Esophagus muscularis mucosa (tissue), 4 donors: ENCODE measurements at regions of chr11 and their contacts with region 1.

Region 1: GRCh38 chr11:69131644-69132300 is 24.0 kb upstream of the SMIM38 start:
- DNase-seq: no peak
- H3K4me3 ChIP-seq: no peak overlapping the region
- H3K27ac ChIP-seq: no peak overlapping the region
- H3K4me1 ChIP-seq: peaks cover 15 to 19% (median 18%) of the 10 kb centered on the region in 4 donors
- H3K27me3 ChIP-seq: no peaks in the 10 kb centered on the region
- CTCF ChIP-seq: peak; percentile 69 to 89 (median 86)
- EP300 ChIP-seq: no peak
- POLR2A ChIP-seq: no peak

Region 2: DNA sequence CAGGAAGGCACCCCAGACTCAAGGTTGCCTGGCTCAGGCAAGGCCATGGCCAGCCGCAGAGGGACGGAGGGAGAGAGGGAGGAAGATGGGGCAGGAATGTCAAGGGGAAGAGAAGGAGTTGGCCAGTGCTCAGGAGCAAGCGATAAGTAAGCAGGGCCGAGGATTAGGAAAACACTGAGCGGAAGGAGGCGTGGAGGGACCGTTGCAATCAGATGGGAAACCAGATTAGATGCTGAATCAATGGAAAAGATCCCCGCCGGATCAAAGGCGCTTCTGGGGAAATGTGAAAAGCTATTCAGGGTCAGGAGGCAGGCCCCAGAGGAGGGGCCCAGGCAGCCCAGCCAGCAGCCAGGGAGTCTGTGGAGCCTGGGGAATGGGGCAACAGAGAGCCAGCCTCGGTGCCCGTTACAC is 135.6 kb after region 1 on chr11:
- intact Hi-C with region 1: no loop called
- DNase-seq: no peak
- H3K4me3 ChIP-seq: no peak overlapping the region
- H3K27ac ChIP-seq: no peak overlapping the region
- H3K4me1 ChIP-seq: peaks cover 0 to 16% (median 2%) of the 10 kb centered on the region in 4 donors
- H3K27me3 ChIP-seq: peaks cover 0 to 21% (median 0%) of the 10 kb centered on the region in 4 donors
- CTCF ChIP-seq: no peak
- EP300 ChIP-seq: no peak
- POLR2A ChIP-seq: no peak

Region 3: GRCh38 chr11:69280994-69281393 is 149.2 kb after region 1 on chr11:
- intact Hi-C with region 1: loop called (anchors 10 kb)
- DNase-seq: no peak
- H3K4me3 ChIP-seq: no peak overlapping the region
- H3K27ac ChIP-seq: no peak overlapping the region
- H3K4me1 ChIP-seq: peaks cover 0 to 7% (median 6%) of the 10 kb centered on the region in 4 donors
- H3K27me3 ChIP-seq: peaks cover 0 to 28% (median 0%) of the 10 kb centered on the region in 4 donors
- CTCF ChIP-seq: no peak
- EP300 ChIP-seq: no peak
- POLR2A ChIP-seq: no peak